Naive thymus-derived CD4-positive, alpha-beta T cell (primary cell): ENCODE measurements at regions of chr6 and their contacts with region 1.

Region 1: DNA sequence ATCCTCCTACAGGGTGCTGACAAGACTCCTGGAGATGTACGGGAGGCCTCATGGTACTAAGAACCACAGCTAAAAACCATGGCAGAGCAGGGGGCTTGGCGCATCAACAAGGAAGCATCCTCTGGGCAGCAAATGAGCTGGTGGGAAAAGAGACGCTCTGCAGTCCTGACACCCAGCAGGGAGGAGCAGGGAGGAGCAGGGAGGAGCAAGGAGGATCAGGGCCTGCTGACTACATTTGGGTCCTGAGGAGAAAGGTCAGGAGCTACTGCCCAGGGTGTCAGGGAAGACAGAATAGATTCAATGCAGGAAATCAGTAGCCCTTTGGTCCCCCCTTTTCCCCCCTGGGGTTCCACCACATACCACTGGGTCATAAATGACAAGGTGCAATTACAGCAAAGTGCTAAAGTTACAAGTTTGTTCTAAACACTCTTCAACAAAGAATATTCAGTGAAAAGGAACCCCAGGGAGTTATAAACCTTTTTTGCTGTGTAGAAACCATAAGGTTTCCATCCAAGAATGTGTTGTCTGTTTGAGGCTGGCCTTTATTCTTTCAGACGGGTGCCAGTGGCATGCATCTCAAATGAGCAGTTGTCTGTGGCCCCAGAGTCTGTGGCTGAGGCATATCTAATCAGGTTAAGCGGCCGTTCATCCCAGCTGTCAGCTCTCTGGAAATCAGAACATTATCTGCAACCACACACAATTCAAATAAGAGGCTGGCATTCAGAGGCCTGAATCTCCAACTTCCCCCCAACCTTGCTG is 325.0 kb downstream of the CDC5L start:
- DNase-seq: no peak
- ATAC-seq: no peak
- H3K4me3 ChIP-seq: no peak overlapping the region
- H3K4me3 Mint-ChIP-seq: no peak overlapping the region
- H3K27ac ChIP-seq: no peak overlapping the region
- H3K27ac Mint-ChIP-seq: no peak overlapping the region
- H3K4me1 ChIP-seq: no peaks in the 10 kb centered on the region
- H3K4me1 Mint-ChIP-seq: peaks cover 0 to 7% (median 5%) of the 10 kb centered on the region in 7 donors
- H3K27me3 ChIP-seq: no peaks in the 10 kb centered on the region
- H3K27me3 Mint-ChIP-seq: peaks cover 0 to 4% (median 0%) of the 10 kb centered on the region in 5 donors

Region 2: GRCh38 chr6:44771647-44772415 is 59.3 kb after region 1 on chr6:
- CTCF ChIA-PET with region 1: no interaction called
- POLR2A ChIA-PET with region 1: interaction called, 11 read pairs
- intact Hi-C with region 1: no loop called
- DNase-seq: no peak
- ATAC-seq: no peak
- H3K4me3 ChIP-seq: no peak overlapping the region
- H3K4me3 Mint-ChIP-seq: no peak overlapping the region
- H3K27ac ChIP-seq: no peak overlapping the region
- H3K27ac Mint-ChIP-seq: no peak overlapping the region
- H3K4me1 ChIP-seq: no peaks in the 10 kb centered on the region
- H3K4me1 Mint-ChIP-seq: peaks cover 0 to 15% (median 5%) of the 10 kb centered on the region in 7 donors
- H3K27me3 ChIP-seq: no peaks in the 10 kb centered on the region
- H3K27me3 Mint-ChIP-seq: peaks cover 0 to 3% (median 0%) of the 10 kb centered on the region in 5 donors

Region 3: DNA sequence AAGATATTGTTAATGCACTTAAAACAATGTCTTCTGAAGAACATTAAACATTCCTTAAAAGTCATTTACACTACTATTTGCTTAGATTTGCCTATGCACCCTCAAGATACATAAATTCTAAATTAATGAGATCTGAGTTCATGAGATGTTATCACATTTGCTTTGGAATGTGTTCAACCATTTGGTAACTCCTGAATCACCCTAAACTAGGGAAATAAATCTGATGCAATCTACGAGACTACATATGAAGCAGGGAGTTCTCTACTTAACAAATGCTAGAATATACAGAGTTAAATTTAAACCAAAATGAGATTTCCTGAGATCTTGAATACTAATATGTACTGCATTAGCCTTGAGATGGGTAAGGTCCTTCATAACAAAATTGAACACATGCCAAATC is 1133.0 kb after region 1 on chr6:
- CTCF ChIA-PET with region 1: no interaction called
- POLR2A ChIA-PET with region 1: no interaction called
- intact Hi-C with region 1: no loop called
- DNase-seq: no peak
- ATAC-seq: no peak
- H3K4me3 ChIP-seq: no peak overlapping the region
- H3K4me3 Mint-ChIP-seq: no peak overlapping the region
- H3K27ac ChIP-seq: no peak overlapping the region
- H3K27ac Mint-ChIP-seq: no peak overlapping the region
- H3K4me1 ChIP-seq: no peaks in the 10 kb centered on the region
- H3K4me1 Mint-ChIP-seq: peaks cover 0 to 2% (median 0%) of the 10 kb centered on the region in 7 donors
- H3K27me3 ChIP-seq: no peaks in the 10 kb centered on the region
- H3K27me3 Mint-ChIP-seq: peaks cover 0 to 6% (median 2%) of the 10 kb centered on the region in 5 donors